ENCODE measurements at regions of chr15 and their contacts with region 1.

Region 1: DNA sequence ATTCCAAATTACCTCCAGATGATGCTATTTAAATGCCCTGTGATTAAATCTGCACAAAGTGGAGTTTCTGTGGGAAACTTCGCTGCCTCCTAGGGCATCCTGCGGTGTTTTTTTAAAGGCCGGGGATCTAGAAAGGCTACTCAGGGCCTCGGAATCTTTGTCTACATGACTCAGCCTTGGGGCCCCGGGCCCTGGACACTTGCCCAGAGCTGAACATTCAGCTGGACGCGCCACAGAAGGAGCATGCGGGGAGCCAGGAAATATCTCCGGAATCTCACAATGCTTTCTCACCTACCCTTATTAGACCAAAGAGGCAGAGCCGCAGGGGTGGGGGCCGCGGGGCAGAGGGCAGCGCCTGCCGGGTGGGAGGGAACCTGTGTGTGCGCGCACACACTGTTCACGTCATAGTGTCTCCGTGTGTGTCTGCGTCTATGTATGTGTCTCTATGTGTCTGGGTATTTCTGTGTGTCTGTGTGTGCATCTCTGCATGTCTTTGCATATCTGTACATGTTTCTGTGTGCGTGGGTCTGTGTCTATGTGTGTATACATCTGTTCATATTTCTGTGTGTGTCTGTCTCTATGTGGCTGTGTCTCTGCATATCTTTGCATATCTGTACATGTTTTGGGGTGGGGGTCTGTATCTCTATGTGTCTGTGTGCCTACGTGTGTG is 145.4 kb upstream of the TPM1 start:
- DNase-seq: peak; percentile 82
- H3K4me3 ChIP-seq: no peak overlapping the region
- H3K27ac ChIP-seq: peak overlapping the region; percentile 67 to 72
- H3K4me1 ChIP-seq: peaks cover 15% of the 10 kb centered on the region
- H3K27me3 ChIP-seq: no peaks in the 10 kb centered on the region
- CTCF ChIP-seq: no peak
- POLR2A ChIP-seq: no peak

Region 2: GRCh38 chr15:62779036-62779775 is 117.9 kb before region 1 on chr15:
- intact Hi-C with region 1: no loop called
- DNase-seq: no peak
- H3K4me3 ChIP-seq: no peak overlapping the region
- H3K27ac ChIP-seq: no peak overlapping the region
- H3K4me1 ChIP-seq: no peaks in the 10 kb centered on the region
- H3K27me3 ChIP-seq: no peaks in the 10 kb centered on the region
- CTCF ChIP-seq: no peak
- POLR2A ChIP-seq: no peak

Region 3: DNA sequence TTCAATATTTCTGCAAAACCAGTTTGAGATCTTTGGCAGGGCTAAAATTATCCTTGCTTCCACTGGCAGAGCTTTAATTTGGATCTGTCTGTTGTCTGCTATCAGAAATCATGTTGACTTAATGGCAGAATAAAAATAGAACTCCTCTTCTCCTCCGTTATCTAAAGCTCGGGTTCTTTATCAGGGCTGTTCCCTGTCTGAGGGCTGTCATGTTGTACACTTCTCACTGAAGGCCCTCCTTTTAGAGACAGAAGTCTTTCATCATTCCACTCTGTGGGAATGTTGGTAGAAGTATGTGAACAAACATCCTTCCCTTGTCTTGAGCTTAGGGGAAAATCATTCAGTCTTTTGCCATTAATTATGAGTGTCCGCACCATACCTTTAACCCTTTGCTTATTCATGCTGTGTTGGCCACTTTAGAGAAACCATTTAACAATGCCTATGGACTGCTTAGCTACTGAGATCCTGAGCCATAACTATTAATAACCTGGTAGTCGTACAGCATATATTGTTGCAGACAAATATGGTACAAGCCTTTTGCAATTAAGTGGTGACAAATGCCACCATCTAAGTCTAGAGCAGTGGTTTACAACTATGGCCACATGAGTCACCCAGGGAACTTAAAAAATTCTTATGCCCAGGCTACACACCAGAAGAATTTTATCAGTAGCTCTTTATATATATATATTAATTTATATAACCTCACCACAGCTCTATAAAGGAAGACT is 80.6 kb before region 1 on chr15:
- intact Hi-C with region 1: no loop called
- DNase-seq: no peak
- H3K4me3 ChIP-seq: no peak overlapping the region
- H3K27ac ChIP-seq: no peak overlapping the region
- H3K4me1 ChIP-seq: no peaks in the 10 kb centered on the region
- H3K27me3 ChIP-seq: no peaks in the 10 kb centered on the region
- CTCF ChIP-seq: no peak
- POLR2A ChIP-seq: no peak

Region 4: DNA sequence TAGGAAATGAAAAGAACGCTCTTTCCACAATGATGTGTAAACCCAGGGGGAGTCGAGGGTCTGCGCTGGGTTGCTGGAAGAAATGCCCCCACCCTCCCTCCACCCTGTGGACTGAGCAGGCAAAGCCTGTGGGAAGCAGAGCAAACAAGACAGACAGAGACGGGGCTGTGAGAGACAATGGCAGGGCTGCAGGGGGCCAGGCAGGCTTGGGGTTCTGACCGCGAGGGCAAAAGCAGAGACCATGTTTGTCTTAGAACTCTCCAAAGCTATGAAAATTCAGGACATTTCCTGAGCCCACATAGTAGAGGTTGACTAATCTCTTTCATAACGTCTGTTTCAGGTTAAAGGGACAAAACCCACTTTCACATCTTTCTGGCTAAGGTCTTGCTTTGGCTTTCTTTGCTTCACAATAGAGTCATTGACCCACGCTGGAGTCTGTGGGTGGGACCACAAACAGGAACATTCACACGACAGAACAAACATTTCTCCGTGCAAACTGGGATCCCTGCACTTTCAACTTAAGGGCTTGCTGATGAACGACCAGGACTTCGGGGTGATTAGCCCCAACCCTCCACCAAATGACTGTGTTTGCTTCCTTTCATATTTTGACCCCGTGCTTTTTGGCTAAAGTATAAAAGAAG is 10.6 kb before region 1 on chr15:
- intact Hi-C with region 1: loop called (anchors 1 kb)
- DNase-seq: no peak
- H3K4me3 ChIP-seq: no peak overlapping the region
- H3K27ac ChIP-seq: peak overlapping the region; percentile 38 to 47
- H3K4me1 ChIP-seq: no peaks in the 10 kb centered on the region
- H3K27me3 ChIP-seq: no peaks in the 10 kb centered on the region
- CTCF ChIP-seq: no peak
- POLR2A ChIP-seq: no peak

Region 5: DNA sequence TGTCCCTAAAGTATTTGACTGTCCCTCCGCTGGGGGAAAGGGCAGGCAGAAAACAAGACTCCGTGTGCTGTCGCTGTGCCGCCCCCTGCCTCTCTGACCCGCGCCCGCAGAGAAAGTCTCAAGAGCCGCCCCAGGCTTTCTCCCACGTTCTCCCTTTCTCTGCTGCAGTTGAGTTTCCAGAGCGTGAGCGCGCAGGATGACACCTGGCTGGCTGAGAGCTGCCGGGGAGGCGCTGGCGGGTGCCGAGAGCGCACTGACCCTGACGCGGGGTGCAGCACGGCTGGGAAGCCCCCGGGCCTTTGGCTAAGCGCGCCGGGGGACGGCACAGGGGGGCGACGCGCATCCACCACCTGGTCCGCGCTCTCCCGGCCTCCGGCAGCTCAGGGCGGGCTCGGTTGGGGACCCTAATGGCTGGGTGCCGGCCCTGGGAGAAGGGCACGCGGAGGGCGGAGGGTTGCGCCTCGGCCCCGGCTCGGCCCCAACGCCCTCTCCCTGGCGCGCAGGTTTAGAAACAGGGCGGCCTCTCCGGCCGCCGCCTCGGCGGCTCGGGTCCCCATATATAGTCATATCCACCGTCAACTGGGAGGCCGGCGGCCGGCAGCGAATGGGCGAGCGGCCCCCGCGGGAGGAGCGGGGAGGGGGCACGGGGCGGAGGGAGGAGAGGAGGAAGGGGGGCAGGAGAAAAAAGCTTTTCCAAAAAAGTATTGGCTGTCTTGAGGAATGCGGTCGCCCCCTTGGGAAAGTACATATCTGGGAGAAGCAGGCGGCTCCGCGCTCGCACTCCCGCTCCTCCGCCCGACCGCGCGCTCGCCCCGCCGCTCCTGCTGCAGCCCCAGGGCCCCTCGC is 145.1 kb after region 1 on chr15 and contains the start of gene TPM1:
- intact Hi-C with region 1: loop called (anchors 1 kb)
- DNase-seq: peak; percentile 63
- H3K4me3 ChIP-seq: peak within 1 kb of the TSS; percentile 51 to 58
- H3K27ac ChIP-seq: peak within 1 kb of the TSS; percentile 91 to 95
- H3K4me1 ChIP-seq: peaks cover under 1% of the 10 kb centered on the region
- H3K27me3 ChIP-seq: no peaks in the 10 kb centered on the region
- CTCF ChIP-seq: no peak
- POLR2A ChIP-seq: peak; percentile 26
- total RNA-seq, gene TPM1: 564 to 629 TPM

Measured in prostate gland (tissue), 2 donors.